Esophagus squamous epithelium (tissue), 5 donors: ENCODE measurements at regions of chr12 and their contacts with region 1.

Region 1: GRCh38 chr12:95117178-95117599 is 43.8 kb upstream of the NR2C1 start:
- DNase-seq: no peak
- H3K4me3 ChIP-seq: no peak overlapping the region
- H3K27ac ChIP-seq: peak overlapping the region; percentile 57 to 79 (median 60)
- H3K4me1 ChIP-seq: peaks cover 0 to 30% (median 9%) of the 10 kb centered on the region in 3 donors
- H3K27me3 ChIP-seq: no peaks in the 10 kb centered on the region
- CTCF ChIP-seq: peak; percentile 63 to 92 (median 74)
- POLR2A ChIP-seq: no peak

Region 2: DNA sequence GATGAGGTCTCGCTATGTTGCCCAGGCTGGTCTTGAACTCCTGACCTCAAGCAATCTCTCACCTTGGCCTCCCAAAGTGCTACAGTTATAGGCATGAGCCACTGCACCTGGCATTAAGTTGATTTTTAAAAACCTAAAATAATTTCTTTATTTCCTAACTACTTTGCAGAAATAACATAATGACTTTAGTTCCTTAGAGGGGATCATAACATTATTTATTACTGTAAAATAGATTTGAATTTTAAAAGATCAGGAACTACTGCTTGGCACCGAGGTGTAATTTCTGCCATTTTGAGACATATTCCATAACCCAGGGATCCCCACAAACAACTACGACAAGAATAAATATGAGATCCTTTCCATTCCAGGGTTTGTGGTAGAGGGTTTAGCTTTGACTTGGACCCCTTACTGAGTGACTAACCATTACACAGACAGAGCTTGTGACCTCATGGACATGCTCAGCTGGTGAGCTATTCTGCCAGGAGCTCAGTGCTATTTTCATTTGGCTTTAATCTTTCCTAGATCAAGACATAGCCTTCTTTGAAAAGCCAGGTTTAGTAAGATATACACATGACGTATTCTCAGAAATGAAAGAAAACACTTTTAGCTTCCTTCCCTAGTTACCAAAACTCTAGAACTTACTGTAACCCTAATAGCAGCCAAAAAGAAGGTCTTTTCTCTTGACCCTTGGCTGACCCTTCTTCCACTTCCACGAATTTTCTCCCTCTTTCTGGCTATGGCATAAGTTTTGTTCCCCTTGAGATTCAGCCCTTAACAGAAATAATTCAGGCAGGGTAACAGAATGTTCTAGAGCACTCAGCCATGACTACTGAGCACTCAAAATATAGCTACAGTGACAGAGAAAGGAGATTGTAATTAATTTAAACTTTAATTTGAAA is 1814.6 kb before region 1 on chr12:
- intact Hi-C with region 1: no loop called
- DNase-seq: no peak
- H3K4me3 ChIP-seq: no peak overlapping the region
- H3K27ac ChIP-seq: peak overlapping the region in 3 of 4 donors; percentile 18 to 61 (median 48)
- H3K4me1 ChIP-seq: peaks cover 0 to 11% (median 0%) of the 10 kb centered on the region in 3 donors
- H3K27me3 ChIP-seq: no peaks in the 10 kb centered on the region
- CTCF ChIP-seq: no peak
- POLR2A ChIP-seq: no peak

Region 3: GRCh38 chr12:95217377-95218149 is 100.4 kb after region 1 on chr12 and contains the starts of genes FGD6 and VEZT:
- intact Hi-C with region 1: loop called (anchors 5 kb)
- DNase-seq: peak; percentile 90
- H3K4me3 ChIP-seq: peak within 1 kb of the TSS; percentile 61 to 86 (median 76)
- H3K27ac ChIP-seq: peak within 1 kb of the TSS; percentile 97 to 99 (median 98)
- H3K4me1 ChIP-seq: peaks cover 0 to 77% (median 23%) of the 10 kb centered on the region in 3 donors
- H3K27me3 ChIP-seq: no peaks in the 10 kb centered on the region
- CTCF ChIP-seq: peak; percentile 38 to 70 (median 64)
- POLR2A ChIP-seq: peak in 3 of 4 donors; percentile 53 to 78 (median 75)
- total RNA-seq, gene FGD6: 10.0 to 19.1 (median 13.2) TPM
- total RNA-seq, gene VEZT: 27.7 to 82.0 (median 45.3) TPM

Region 4: DNA sequence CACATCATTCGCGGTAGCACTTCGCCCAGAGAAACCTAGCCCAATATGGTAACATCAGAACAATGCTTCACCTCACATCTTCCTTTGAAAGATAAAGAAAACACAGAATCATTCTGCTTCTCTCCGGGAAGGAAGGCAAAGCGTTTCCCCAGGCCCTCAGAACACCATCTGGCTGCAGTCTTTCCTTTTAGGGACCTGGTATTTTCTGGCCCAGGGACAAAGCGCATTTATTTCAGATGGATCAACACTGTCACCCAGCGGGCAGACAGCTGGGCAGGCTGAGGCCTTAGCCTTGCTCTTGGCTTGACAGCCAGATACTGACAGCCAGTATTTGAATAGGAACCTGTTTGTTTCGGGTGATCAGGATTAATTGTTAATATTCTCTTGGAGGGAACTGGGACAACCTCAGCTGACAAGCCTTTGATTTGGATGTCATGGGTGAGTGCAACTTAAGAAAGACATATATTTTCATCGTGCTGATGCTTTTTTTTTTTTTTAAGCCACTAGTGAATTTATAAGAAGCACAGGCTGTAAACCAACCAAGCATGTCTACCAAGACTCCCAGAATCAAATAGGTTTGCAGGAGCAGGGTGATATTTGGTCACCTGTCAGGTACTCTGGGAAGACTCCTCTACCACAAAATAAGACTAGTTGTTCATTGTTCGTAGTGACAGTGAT is 219.3 kb after region 1 on chr12:
- intact Hi-C with region 1: loop called (anchors 5 kb)
- DNase-seq: no peak
- H3K4me3 ChIP-seq: peak overlapping the region in 2 of 4 donors; percentile 4 to 48
- H3K27ac ChIP-seq: peak overlapping the region in 3 of 4 donors; percentile 67 to 76 (median 71)
- H3K4me1 ChIP-seq: peaks cover 0 to 19% (median 6%) of the 10 kb centered on the region in 3 donors
- H3K27me3 ChIP-seq: no peaks in the 10 kb centered on the region
- CTCF ChIP-seq: peak; percentile 48 to 86 (median 68)
- POLR2A ChIP-seq: no peak

Region 5: GRCh38 chr12:95532851-95533250 is 415.7 kb after region 1 on chr12:
- intact Hi-C with region 1: loop called (anchors 5 kb)
- DNase-seq: no peak
- H3K4me3 ChIP-seq: no peak overlapping the region
- H3K27ac ChIP-seq: no peak overlapping the region
- H3K4me1 ChIP-seq: peaks cover 0 to 15% (median 0%) of the 10 kb centered on the region in 3 donors
- H3K27me3 ChIP-seq: no peaks in the 10 kb centered on the region
- CTCF ChIP-seq: no peak
- POLR2A ChIP-seq: no peak

Region 6: DNA sequence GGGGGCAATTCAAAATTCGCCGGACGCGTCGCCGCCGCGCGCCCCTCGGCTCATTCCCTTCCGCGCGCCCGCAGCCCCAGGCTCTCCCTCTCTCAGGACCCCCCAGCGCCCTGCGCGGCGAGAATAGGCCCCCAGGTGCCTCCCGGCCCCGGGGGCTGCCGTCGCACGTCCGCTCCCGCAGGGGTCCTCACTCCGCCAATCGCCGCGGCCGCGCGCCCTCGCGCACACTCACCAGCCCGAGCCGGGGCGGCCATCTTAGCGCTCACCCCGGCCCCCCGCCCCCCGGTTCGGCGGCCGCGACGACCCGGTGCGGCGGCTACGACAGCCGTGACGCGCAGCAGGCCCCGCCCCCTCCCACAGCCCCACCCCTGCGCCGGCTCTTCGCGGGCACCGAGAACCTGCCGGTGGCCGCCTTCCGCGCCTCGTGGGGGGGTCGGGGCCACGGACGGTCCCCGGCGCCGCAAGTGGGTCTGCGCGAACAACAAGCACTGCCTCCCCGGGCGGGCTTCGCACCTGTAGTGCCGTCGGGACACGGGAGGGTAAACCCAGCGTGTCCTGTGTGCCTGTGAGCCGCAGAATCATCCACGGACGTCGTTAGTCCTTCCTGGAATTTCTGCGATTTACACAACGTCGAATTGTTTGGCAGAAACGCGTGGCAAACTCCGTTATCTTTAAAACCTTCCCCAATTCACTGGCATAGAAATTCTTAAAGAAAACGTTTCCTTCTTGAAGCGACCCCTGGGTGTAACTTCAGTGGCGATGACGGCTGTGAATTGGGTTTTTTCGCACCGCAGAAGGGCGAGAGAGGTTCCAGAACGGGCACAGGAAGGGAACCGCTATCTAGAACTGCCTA is 431.6 kb after region 1 on chr12:
- intact Hi-C with region 1: no loop called
- DNase-seq: no peak
- H3K4me3 ChIP-seq: peak overlapping the region; percentile 53 to 82 (median 64)
- H3K27ac ChIP-seq: peak overlapping the region; percentile 62 to 80 (median 76)
- H3K4me1 ChIP-seq: peaks cover 0 to 17% (median 0%) of the 10 kb centered on the region in 3 donors
- H3K27me3 ChIP-seq: peaks cover 0 to 26% (median 2%) of the 10 kb centered on the region in 4 donors
- CTCF ChIP-seq: no peak
- POLR2A ChIP-seq: peak in 1 of 4 donors; percentile 72